CD8-positive, alpha-beta memory T cell (primary cell): ENCODE measurements at regions of chr4 and their contacts with region 1.

Region 1: DNA sequence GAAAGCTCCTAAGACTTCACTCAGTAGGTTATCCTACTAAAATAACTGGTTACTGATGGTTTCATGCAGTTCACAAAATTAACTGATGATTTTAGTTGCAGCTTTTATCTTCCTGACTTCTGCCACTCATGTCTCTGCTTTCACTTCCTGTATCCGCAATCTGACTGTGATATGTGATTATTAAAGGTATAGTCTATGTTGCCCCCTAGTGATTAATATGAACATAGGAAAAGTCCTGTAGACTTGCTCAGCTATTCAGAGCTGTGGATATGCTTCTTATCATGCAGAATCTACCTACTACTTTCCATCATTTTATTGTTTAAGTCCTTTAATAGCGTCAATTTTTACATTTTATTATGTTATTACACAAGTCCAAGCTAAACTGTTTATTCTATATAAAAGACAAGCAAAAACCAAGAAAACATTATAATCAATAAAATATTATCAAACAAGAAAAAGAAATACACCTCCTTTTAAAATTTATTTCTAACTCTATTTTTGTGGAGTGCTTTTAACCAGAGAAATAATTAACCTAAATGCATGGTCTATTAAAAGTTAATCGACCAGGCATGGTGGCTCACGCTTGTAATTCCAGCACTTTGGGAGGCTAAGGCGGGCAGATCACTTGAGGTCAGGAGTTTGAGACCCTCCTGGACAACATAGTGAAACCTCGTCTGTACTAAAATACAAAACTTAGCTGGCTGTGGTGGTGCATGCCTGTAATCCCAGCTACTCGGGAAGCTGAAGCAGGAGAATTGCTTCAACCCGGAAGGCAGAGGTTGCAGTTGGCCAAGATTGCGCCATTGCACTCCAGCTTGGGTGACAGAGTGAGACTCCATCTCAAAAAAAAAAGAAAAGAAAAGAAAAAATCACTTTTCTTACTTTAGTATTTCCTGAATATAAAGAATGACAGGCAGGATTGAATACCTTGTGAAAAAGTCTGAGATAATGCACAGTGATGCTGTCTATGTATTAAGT is 40.4 kb upstream of the TLR2 start:
- DNase-seq: peak in 2 of 5 donors; percentile 44 to 60
- H3K4me3 ChIP-seq: no peak overlapping the region
- H3K4me3 Mint-ChIP-seq: peak overlapping the region in 2 of 7 donors; percentile 7 to 9
- H3K27ac ChIP-seq: no peak overlapping the region
- H3K27ac Mint-ChIP-seq: peak overlapping the region in 3 of 8 donors; percentile 5 to 41 (median 15)
- H3K4me1 ChIP-seq: peaks cover 4% of the 10 kb centered on the region
- H3K4me1 Mint-ChIP-seq: peaks cover 4 to 8% (median 6%) of the 10 kb centered on the region in 3 donors
- H3K27me3 ChIP-seq: no peaks in the 10 kb centered on the region
- H3K27me3 Mint-ChIP-seq: peaks cover 0 to 2% of the 10 kb centered on the region in 2 donors

Region 2: GRCh38 chr4:153142700-153143438 is 500.8 kb before region 1 on chr4:
- CTCF ChIA-PET with region 1: interaction called, 11 read pairs
- POLR2A ChIA-PET with region 1: no interaction called
- DNase-seq: peak in 4 of 5 donors; percentile 13 to 55 (median 41)
- H3K4me3 ChIP-seq: no peak overlapping the region
- H3K4me3 Mint-ChIP-seq: no peak overlapping the region
- H3K27ac ChIP-seq: no peak overlapping the region
- H3K27ac Mint-ChIP-seq: no peak overlapping the region
- H3K4me1 ChIP-seq: no peaks in the 10 kb centered on the region
- H3K4me1 Mint-ChIP-seq: peaks cover 0 to 4% (median 3%) of the 10 kb centered on the region in 3 donors
- H3K27me3 ChIP-seq: no peaks in the 10 kb centered on the region
- H3K27me3 Mint-ChIP-seq: peaks cover 16 to 24% of the 10 kb centered on the region in 2 donors

Region 3: DNA sequence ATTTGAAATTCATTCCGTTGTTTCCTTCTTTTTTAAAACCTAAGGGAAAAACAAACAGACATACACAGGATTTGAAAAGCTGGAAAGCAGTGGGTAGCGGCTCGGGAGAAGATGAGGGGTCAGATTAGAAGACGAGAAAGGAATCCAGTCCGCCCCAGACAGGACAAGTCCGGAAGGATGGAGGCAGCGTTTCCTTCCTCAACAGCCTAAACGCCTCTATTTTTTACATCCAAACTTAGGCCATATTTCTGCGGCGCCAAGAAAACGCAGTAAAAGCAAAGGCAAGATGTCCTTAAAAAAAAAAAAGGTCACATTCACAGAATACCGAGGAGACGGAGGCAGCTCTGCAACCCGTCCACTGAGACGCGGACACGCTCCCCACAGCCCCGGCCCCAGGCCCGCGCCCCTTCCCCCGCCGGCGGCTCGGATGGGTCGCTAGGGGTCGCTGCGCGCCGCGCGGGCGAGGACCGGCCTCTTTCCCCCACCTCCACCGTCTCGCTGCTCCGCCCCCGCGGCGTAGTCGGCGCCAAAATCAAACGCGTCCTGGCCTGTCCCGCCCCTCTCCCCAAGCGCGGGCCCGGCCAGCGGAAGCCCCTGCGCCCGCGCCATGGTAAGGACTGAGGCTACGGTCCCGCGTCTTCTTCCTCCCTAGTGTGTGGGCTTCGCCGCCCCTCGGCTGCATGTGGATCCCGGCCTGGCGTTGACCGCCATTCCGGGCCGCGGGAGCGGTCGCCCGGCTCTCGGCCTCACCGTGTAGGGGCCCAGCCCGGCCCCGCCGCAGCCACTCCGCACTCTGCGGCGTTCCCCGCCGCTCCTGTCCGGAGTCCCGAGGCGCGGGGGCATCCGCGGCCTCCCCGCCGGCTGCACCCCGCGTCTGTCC is 299.3 kb before region 1 on chr4 and contains the start of gene MND1:
- CTCF ChIA-PET with region 1: interaction called, 20 read pairs
- POLR2A ChIA-PET with region 1: no interaction called
- DNase-seq: peak; percentile 83 to 92 (median 86)
- H3K4me3 ChIP-seq: peak within 1 kb of the TSS; percentile 81
- H3K4me3 Mint-ChIP-seq: peak within 1 kb of the TSS; percentile 92 to 97 (median 95)
- H3K27ac ChIP-seq: peak within 1 kb of the TSS; percentile 55
- H3K27ac Mint-ChIP-seq: peak within 1 kb of the TSS in 6 of 8 donors; percentile 24 to 89 (median 64)
- H3K4me1 ChIP-seq: peaks cover 4% of the 10 kb centered on the region
- H3K4me1 Mint-ChIP-seq: peaks cover 8 to 29% (median 14%) of the 10 kb centered on the region in 3 donors
- H3K27me3 ChIP-seq: no peaks in the 10 kb centered on the region
- H3K27me3 Mint-ChIP-seq: peaks cover 6 to 16% of the 10 kb centered on the region in 2 donors
- total RNA-seq, gene MND1: 20.2 to 21.6 TPM

Region 4: DNA sequence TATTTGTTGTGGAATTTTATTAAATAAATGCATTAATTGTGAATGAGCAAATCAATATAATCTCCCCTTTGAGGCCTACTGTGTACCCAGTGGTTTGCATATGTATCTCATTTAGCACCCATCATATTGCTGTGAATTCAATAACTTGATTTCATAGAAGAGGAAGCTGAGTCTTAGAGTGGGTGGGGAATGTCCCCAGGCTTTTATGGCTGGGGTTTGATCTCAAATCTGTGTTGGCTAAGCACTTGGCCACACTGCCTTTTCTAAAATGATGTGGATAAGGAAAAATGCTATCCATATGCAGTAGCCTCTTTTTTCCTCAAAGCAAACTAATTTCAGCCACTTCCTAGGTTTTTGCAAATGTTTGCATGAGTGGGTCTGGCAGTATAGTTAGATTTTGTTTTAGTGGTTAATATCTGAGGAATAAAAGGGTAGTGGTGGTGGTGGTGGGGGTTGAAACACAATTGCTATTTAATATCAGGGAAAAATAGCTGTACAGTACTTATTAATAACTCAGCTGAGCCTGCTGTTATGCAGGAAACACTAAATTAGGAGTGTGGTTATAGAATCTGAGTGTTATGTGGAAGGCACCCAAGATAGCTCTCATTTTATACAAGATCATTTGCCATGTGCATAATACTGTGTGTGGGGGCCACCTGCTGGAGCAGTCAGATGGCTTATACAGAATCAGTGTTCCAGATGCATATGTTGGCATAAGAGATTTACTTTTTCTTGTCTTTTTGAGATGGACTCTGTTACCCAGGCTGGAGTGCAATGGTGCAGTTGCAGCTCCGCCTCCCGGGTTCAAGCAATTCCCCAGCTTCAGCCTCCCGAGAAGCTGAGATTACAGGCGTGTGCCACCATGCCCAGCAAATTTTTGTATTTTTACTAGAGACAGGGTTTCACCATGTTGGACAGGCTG is 69.6 kb before region 1 on chr4:
- CTCF ChIA-PET with region 1: interaction called, 12 read pairs
- POLR2A ChIA-PET with region 1: no interaction called
- DNase-seq: peak; percentile 33 to 80 (median 52)
- H3K4me3 ChIP-seq: no peak overlapping the region
- H3K4me3 Mint-ChIP-seq: peak overlapping the region in 3 of 7 donors; percentile 24 to 46 (median 30)
- H3K27ac ChIP-seq: no peak overlapping the region
- H3K27ac Mint-ChIP-seq: peak overlapping the region in 7 of 8 donors; percentile 22 to 90 (median 63)
- H3K4me1 ChIP-seq: peaks cover 20% of the 10 kb centered on the region
- H3K4me1 Mint-ChIP-seq: peaks cover 53 to 73% (median 65%) of the 10 kb centered on the region in 3 donors
- H3K27me3 ChIP-seq: no peaks in the 10 kb centered on the region
- H3K27me3 Mint-ChIP-seq: no peaks in the 10 kb centered on the region